ENCODE measurements at regions of chr7 and their contacts with region 1.

Region 1: DNA sequence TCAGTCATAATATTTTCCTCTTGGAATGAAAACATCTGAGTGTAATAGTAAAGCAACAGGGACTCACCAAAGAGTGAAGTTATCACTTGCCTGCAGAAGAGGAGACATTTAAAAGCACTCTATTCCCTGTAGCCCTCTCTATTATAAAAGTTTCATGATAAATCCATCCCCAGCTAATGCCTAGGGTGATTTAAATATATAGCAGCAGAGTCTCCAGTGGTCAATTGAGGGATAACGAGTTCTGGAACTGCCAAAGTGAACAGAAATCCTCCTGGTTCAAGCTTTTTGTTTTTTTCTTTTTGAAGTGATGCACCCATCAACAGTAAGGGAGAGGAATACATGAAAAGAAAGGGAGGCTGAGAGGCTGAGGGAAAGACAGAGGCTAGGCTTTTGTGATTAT is 87.3 kb downstream of the EVX1 start:
- DNase-seq: no peak
- ATAC-seq: peak; percentile 69; the same call in 1 of the 2 replicates
- H3K4me3 ChIP-seq: no peak overlapping the region
- H3K27ac ChIP-seq: no peak overlapping the region
- H3K4me1 ChIP-seq: no peaks in the 10 kb centered on the region
- H3K27me3 ChIP-seq: no peaks in the 10 kb centered on the region
- CTCF ChIP-seq: peak; percentile 38; the same call in 1 of the 2 replicates

Region 2: DNA sequence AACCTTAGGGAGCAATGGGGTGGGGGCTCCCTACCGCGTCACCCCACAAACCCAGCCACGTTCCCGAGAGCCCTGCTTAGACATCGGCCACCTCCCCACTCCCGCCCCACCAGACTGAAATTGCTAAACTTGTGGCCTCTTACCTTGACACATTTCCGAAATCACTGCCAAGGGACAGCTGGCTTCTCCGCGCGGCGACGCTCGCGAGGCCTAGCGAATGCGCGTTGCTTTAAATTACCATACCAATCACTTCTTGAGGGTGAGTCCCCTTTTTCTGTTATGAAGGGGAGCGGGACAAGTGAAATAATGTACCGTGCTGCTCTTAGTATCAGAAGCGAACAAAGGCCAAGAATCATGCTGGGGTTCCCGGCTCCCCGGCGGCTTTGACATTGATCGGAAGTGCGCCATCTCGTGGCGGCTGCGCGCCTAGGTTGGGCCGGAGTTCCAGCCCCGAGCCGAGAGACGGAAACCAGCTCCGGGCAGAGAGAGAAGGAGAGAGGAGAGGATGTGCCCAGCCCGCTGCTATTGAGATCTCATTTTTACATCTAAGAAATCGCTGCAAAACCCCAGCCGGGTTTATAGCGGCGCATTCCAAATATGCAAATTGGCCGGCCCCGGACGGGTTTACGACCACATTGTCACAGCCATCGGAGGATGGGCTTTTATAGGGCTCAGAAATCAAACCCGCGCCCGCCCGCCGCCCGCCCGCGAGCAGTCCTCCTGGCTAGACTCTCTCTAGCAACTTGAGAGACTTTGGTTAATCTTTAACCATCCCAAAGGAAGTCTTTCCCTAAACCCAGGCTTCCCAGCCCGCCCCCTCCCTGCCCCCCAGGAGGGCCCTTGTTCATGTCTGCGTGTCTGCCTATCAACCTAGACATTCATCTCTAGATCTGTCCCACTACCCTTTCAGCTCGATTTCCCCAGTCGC is 150.1 kb before region 1 on chr7:
- CTCF ChIA-PET with region 1: interaction called, 10 read pairs
- POLR2A ChIA-PET with region 1: no interaction called
- in situ Hi-C with region 1: no loop called
- intact Hi-C with region 1: no loop called
- DNase-seq: no peak
- ATAC-seq: peak; percentile 83
- H3K4me3 ChIP-seq: peak overlapping the region; percentile 32 to 52
- H3K27ac ChIP-seq: peak overlapping the region; percentile 57
- H3K4me1 ChIP-seq: peaks cover 15% of the 10 kb centered on the region; the same call in 1 of the 2 replicates
- H3K27me3 ChIP-seq: no peaks in the 10 kb centered on the region
- CTCF ChIP-seq: peak; percentile 99

Region 3: GRCh38 chr7:27202018-27202861 is 127.7 kb before region 1 on chr7:
- CTCF ChIA-PET with region 1: interaction called, 21 read pairs
- POLR2A ChIA-PET with region 1: no interaction called
- in situ Hi-C with region 1: no loop called
- intact Hi-C with region 1: no loop called
- DNase-seq: no peak
- ATAC-seq: no peak
- H3K4me3 ChIP-seq: no peak overlapping the region
- H3K27ac ChIP-seq: no peak overlapping the region
- H3K4me1 ChIP-seq: peaks cover 13% of the 10 kb centered on the region; the same call in 1 of the 2 replicates
- H3K27me3 ChIP-seq: no peaks in the 10 kb centered on the region; the same call in 1 of the 2 replicates
- CTCF ChIP-seq: no peak

Region 4: GRCh38 chr7:27501001-27501400 is 171.1 kb after region 1 on chr7:
- CTCF ChIA-PET with region 1: no interaction called
- POLR2A ChIA-PET with region 1: no interaction called
- in situ Hi-C with region 1: no loop called
- intact Hi-C with region 1: no loop called
- DNase-seq: no peak
- ATAC-seq: peak; percentile 21; the same call in 1 of the 2 replicates
- H3K4me3 ChIP-seq: no peak overlapping the region
- H3K27ac ChIP-seq: no peak overlapping the region
- H3K4me1 ChIP-seq: no peaks in the 10 kb centered on the region
- H3K27me3 ChIP-seq: no peaks in the 10 kb centered on the region
- CTCF ChIP-seq: no peak

Measured in Panc1 (cell line).